Mammary epithelial cell (primary cell): ENCODE measurements at regions of chr5 and their contacts with region 1.

Region 1: GRCh38 chr5:102865510-102866236 is 110.6 kb downstream of the PAM start:
- DNase-seq: peak; percentile 81
- H3K4me3 ChIP-seq: peak overlapping the region; percentile 54 to 67 (median 58)
- H3K27ac ChIP-seq: peak overlapping the region; percentile 62
- H3K4me1 ChIP-seq: peaks cover 12% of the 10 kb centered on the region
- H3K27me3 ChIP-seq: no peaks in the 10 kb centered on the region
- CTCF ChIP-seq: no peak

Region 2: DNA sequence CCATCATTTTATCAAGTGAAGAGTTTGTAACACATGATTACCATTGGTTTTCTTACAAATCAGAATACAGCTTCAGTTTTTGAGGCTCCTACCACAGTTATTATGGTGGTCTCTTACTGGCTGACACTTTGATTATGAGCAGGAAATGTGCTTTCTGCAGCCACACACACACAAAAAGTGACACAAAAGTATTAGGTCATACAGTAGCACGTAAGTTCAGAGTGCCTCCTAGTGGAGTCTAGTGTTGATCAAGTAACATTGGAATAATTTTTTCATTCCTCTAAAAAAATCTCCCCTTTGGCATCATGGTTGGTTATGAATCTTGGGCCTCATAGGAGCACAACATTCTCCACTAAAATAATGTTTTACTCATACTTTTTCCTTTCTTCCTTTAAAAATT is 73.0 kb before region 1 on chr5:
- CTCF ChIA-PET with region 1: no interaction called
- dilution Hi-C with region 1: no loop called
- in situ Hi-C with region 1: no loop called
- intact Hi-C with region 1: loop called (anchors 5 kb)
- DNase-seq: no peak
- H3K4me3 ChIP-seq: no peak overlapping the region
- H3K27ac ChIP-seq: no peak overlapping the region
- H3K4me1 ChIP-seq: peaks cover 3% of the 10 kb centered on the region
- H3K27me3 ChIP-seq: no peaks in the 10 kb centered on the region
- CTCF ChIP-seq: peak; percentile 37 to 42

Region 3: DNA sequence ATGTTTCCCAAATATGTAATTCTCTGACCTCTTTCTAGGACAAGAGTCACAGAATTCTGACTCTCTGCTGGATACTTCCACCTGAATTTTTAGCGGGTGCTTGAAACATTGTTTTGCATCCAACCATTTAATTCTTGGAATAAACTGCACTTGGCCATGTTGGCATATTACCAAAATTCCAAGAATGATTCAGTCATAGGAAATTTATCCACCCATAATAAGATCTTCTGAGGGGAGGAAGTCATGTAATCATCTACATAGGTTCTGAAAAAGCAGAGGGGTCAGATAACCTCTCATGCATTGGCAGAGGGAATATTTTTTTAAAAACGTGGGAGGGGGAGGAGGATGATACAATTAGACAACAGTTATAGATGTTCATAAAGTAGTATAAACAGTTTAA is 46.3 kb after region 1 on chr5:
- CTCF ChIA-PET with region 1: no interaction called
- dilution Hi-C with region 1: no loop called
- in situ Hi-C with region 1: no loop called
- intact Hi-C with region 1: loop called (anchors 5 kb)
- DNase-seq: peak; percentile 34
- H3K4me3 ChIP-seq: no peak overlapping the region
- H3K27ac ChIP-seq: peak overlapping the region; percentile 36
- H3K4me1 ChIP-seq: peaks cover 31% of the 10 kb centered on the region
- H3K27me3 ChIP-seq: no peaks in the 10 kb centered on the region
- CTCF ChIP-seq: no peak

Region 4: GRCh38 chr5:102959055-102959454 is 93.4 kb after region 1 on chr5:
- CTCF ChIA-PET with region 1: no interaction called
- dilution Hi-C with region 1: no loop called
- in situ Hi-C with region 1: no loop called
- intact Hi-C with region 1: loop called (anchors 5 kb)
- DNase-seq: peak; percentile 81
- H3K4me3 ChIP-seq: no peak overlapping the region
- H3K27ac ChIP-seq: peak overlapping the region; percentile 98
- H3K4me1 ChIP-seq: peaks cover 17% of the 10 kb centered on the region
- H3K27me3 ChIP-seq: no peaks in the 10 kb centered on the region
- CTCF ChIP-seq: no peak

Region 5: DNA sequence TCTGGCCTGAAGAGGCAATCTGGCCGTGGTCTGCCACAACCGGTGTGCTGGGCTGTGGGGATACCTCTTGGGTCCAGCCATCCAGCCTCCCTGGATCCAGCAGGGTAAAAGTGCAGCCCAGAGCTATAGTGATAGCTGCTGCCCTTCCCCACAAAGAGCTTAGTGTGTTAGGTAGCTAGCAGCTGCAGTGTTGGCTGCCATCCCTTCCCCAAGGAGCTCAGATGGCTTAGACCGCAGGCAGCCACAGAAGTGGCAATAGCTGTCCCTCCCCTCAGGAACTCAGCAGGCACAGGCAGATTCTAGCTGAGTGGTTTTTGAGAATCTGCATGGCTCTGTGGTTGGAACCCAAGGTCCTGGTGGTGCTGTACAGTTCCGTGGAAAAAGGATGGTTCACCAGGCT is 214.1 kb after region 1 on chr5:
- CTCF ChIA-PET with region 1: no interaction called
- dilution Hi-C with region 1: no loop called
- in situ Hi-C with region 1: no loop called
- intact Hi-C with region 1: no loop called
- DNase-seq: no peak
- H3K4me3 ChIP-seq: no peak overlapping the region
- H3K27ac ChIP-seq: no peak overlapping the region
- H3K4me1 ChIP-seq: no peaks in the 10 kb centered on the region
- H3K27me3 ChIP-seq: no peaks in the 10 kb centered on the region
- CTCF ChIP-seq: no peak

Region 6: GRCh38 chr5:103119765-103120606 is 254.3 kb after region 1 on chr5 and contains the starts of genes GIN1 and PPIP5K2:
- CTCF ChIA-PET with region 1: no interaction called
- dilution Hi-C with region 1: no loop called
- in situ Hi-C with region 1: no loop called
- intact Hi-C with region 1: loop called (anchors 5 kb)
- DNase-seq: peak; percentile 98
- H3K4me3 ChIP-seq: peak within 1 kb of the TSS; percentile 67 to 91 (median 84)
- H3K27ac ChIP-seq: peak within 1 kb of the TSS; percentile 96
- H3K4me1 ChIP-seq: no peaks in the 10 kb centered on the region
- H3K27me3 ChIP-seq: no peaks in the 10 kb centered on the region
- CTCF ChIP-seq: no peak
- total RNA-seq, gene GIN1: 3.8 to 9.3 TPM
- total RNA-seq, gene PPIP5K2: 41.9 to 50.3 TPM